Activated CD4-positive, alpha-beta T cell treated with anti-CD3 and anti-CD28 coated beads, Interleukin-2, amount 10 ng/mL, durations not matched to agents 24 days and 14 days (primary cell): ENCODE measurements at regions of chr14 and their contacts with region 1.

Region 1: GRCh38 chr14:70972107-70972976 is 65.1 kb downstream of the PCNX1 start:
- DNase-seq: peak; percentile 94
- H3K4me3 Mint-ChIP-seq: no peak overlapping the region
- H3K27ac Mint-ChIP-seq: peak overlapping the region; percentile 17
- H3K4me1 Mint-ChIP-seq: peaks cover 18% of the 10 kb centered on the region
- H3K27me3 Mint-ChIP-seq: no peaks in the 10 kb centered on the region

Region 2: DNA sequence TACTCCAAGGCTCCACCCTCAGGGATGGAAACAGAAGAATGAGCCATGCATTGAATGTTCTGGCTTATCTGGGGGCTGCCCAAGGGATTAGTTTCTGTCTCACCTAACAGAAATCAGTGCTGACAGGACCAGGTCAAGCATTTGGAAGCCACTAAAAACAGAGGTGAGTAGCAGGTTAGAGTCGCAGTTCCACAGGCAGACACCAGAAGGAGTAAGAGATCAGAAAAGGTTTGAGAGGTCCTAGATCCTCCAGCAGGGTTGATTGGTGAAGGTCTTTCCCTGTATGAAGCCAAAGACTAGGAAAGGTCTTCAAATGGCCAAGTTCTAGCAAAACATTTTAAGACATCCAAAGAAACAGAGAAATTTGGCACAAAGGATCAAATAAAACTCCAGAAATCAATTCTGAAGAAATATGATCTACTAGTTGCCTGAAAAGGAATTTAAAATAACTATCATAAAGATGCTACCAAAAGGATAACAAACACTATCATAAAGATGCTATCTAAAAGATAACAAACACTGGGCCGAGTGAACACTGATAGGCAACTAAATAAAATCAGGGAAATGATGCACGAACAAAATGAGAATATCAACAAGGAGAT is 350.1 kb before region 1 on chr14:
- intact Hi-C with region 1: loop called (anchors 2 kb)
- DNase-seq: peak; percentile 89
- H3K4me3 Mint-ChIP-seq: no peak overlapping the region
- H3K27ac Mint-ChIP-seq: no peak overlapping the region
- H3K4me1 Mint-ChIP-seq: no peaks in the 10 kb centered on the region
- H3K27me3 Mint-ChIP-seq: peaks cover 16% of the 10 kb centered on the region

Region 3: GRCh38 chr14:71031000-71031399 is 58.7 kb after region 1 on chr14:
- intact Hi-C with region 1: no loop called
- DNase-seq: no peak
- H3K4me3 Mint-ChIP-seq: no peak overlapping the region
- H3K27ac Mint-ChIP-seq: no peak overlapping the region
- H3K4me1 Mint-ChIP-seq: no peaks in the 10 kb centered on the region
- H3K27me3 Mint-ChIP-seq: no peaks in the 10 kb centered on the region